Endothelial cell of umbilical vein (primary cell): ENCODE measurements at regions of chr17 and their contacts with region 1.

Region 1: GRCh38 chr17:16491703-16492612 is at the start of gene LRRC75A:
- DNase-seq: peak; percentile 33
- H3K4me3 ChIP-seq: peak within 1 kb of the TSS; percentile 8 to 47 (median 14)
- H3K27ac ChIP-seq: no peak within 1 kb of the TSS
- H3K4me1 ChIP-seq: peaks cover 15% of the 10 kb centered on the region
- H3K27me3 ChIP-seq: peaks cover 24 to 33% of the 10 kb centered on the region in 2 experiments
- CTCF ChIP-seq: peak in 1 of 2 donors; percentile 27
- POLR2A ChIP-seq: no peak
- total RNA-seq, gene LRRC75A: 2.9 and 3.7 TPM in 2 replicates

Region 2: GRCh38 chr17:16463358-16464302 is 28.3 kb before region 1 on chr17:
- CTCF ChIA-PET with region 1: interaction called, 10 read pairs
- POLR2A ChIA-PET with region 1: no interaction called
- dilution Hi-C with region 1: no loop called
- intact Hi-C with region 1: loop called (anchors 2 kb)
- DNase-seq: peak; percentile 70
- H3K4me3 ChIP-seq: no peak overlapping the region
- H3K27ac ChIP-seq: no peak overlapping the region
- H3K4me1 ChIP-seq: peaks cover 14% of the 10 kb centered on the region
- H3K27me3 ChIP-seq: no peaks in the 10 kb centered on the region
- CTCF ChIP-seq: peak; percentile 36 to 69
- POLR2A ChIP-seq: no peak

Region 3: DNA sequence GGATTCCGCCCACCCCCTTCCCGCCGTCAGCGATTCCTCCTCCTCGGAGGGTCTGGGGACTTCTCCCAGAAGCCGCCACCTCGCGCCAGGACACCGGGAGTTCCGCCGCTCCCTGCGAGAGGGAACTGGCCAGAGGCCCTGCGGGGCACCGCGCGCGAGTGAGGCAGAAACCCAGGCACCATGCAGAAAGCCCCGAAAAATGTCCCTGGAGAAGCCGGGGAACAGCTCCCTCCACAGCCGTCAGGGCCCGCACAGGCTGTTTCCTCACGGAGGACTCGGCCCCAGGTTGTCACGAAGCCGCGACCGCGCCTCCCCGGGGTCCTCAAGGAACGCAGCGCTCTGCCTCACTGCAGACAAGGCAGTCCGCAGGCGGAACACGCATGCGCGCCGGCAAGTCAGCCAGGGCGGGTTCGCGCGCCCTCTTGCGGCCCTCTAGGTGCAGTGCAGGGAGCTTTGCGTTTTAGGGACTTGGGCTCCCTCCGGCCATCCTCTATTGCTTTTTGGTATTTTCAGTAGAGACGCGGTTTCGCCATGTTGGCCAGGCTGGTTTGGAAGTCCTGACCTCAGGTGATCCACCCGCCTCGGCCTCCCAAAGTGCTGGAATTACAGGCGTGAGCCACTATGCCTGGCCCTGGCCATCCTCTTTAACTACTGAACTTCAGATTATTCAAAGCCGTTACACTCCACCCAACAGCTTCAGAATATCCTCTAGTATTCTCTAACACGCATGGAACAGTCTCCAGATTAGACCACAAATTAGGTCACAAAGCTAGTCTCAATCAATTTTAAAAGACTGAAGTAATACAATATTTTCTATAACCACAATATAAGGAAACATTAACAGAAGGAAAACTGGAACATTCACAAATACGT is 97.4 kb after region 1 on chr17:
- CTCF ChIA-PET with region 1: no interaction called
- POLR2A ChIA-PET with region 1: no interaction called
- dilution Hi-C with region 1: no loop called
- intact Hi-C with region 1: no loop called
- DNase-seq: peak; percentile 87
- H3K4me3 ChIP-seq: peak overlapping the region; percentile 34 to 50 (median 35)
- H3K27ac ChIP-seq: no peak overlapping the region
- H3K4me1 ChIP-seq: peaks cover 4% of the 10 kb centered on the region
- H3K27me3 ChIP-seq: peaks cover 23 to 31% of the 10 kb centered on the region in 2 experiments
- CTCF ChIP-seq: peak; percentile 96 to 100
- POLR2A ChIP-seq: no peak